ENCODE measurements at regions of chr3 and their contacts with region 1.

Region 1: GRCh38 chr3:35908366-35909232 is 269.3 kb downstream of the ARPP21 start:
- DNase-seq: peak; percentile 81
- ATAC-seq: peak; percentile 95
- H3K4me3 Mint-ChIP-seq: no peak overlapping the region
- H3K27ac Mint-ChIP-seq: no peak overlapping the region
- H3K4me1 Mint-ChIP-seq: peaks cover 30% of the 10 kb centered on the region
- H3K27me3 Mint-ChIP-seq: no peaks in the 10 kb centered on the region
- CTCF ChIP-seq: peak; percentile 72

Region 2: DNA sequence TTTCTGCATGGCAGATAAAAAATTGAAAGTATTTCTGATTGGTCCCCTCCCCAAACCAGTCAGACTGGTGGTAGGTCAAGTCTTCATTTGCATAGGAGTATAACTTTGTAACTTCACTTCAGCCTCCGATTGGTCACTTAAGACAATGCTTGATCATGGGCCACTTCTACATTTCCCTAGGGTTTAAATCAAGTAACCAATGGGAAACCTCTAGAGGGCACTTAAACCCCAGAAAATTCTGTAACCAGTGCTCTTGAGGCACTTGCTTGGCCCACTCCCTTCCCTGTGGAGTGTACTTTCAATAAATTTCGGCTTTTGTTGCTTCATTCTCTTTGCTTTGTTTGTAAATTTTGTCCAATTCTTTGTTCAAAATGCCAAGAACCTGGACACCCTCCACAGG is 43.7 kb before region 1 on chr3:
- CTCF ChIA-PET with region 1: interaction called, 10 read pairs
- POLR2A ChIA-PET with region 1: no interaction called
- DNase-seq: no peak
- ATAC-seq: peak; percentile 92
- H3K4me3 Mint-ChIP-seq: no peak overlapping the region
- H3K27ac Mint-ChIP-seq: no peak overlapping the region
- H3K4me1 Mint-ChIP-seq: peaks cover 8% of the 10 kb centered on the region
- H3K27me3 Mint-ChIP-seq: no peaks in the 10 kb centered on the region
- CTCF ChIP-seq: no peak

Region 3: GRCh38 chr3:35929158-35929557 is 20.6 kb after region 1 on chr3:
- CTCF ChIA-PET with region 1: interaction called, 13 read pairs
- POLR2A ChIA-PET with region 1: no interaction called
- DNase-seq: no peak
- ATAC-seq: no peak
- H3K4me3 Mint-ChIP-seq: no peak overlapping the region
- H3K27ac Mint-ChIP-seq: no peak overlapping the region
- H3K4me1 Mint-ChIP-seq: no peaks in the 10 kb centered on the region
- H3K27me3 Mint-ChIP-seq: no peaks in the 10 kb centered on the region
- CTCF ChIP-seq: no peak